Sigmoid colon (tissue), 7 donors: ENCODE measurements at regions of chr3 and their contacts with region 1.

Region 1: GRCh38 chr3:13648060-13649001 is 99.4 kb downstream of the FBLN2 start:
- DNase-seq: peak; percentile 86
- H3K4me3 ChIP-seq: no peak overlapping the region
- H3K27ac ChIP-seq: no peak overlapping the region
- H3K4me1 ChIP-seq: peaks cover 0 to 23% (median 16%) of the 10 kb centered on the region in 4 donors
- H3K27me3 ChIP-seq: peaks cover 0 to 17% (median 9%) of the 10 kb centered on the region in 3 donors
- CTCF ChIP-seq: peak; percentile 86 to 98 (median 92)
- EP300 ChIP-seq: no peak
- POLR2A ChIP-seq: no peak

Region 2: DNA sequence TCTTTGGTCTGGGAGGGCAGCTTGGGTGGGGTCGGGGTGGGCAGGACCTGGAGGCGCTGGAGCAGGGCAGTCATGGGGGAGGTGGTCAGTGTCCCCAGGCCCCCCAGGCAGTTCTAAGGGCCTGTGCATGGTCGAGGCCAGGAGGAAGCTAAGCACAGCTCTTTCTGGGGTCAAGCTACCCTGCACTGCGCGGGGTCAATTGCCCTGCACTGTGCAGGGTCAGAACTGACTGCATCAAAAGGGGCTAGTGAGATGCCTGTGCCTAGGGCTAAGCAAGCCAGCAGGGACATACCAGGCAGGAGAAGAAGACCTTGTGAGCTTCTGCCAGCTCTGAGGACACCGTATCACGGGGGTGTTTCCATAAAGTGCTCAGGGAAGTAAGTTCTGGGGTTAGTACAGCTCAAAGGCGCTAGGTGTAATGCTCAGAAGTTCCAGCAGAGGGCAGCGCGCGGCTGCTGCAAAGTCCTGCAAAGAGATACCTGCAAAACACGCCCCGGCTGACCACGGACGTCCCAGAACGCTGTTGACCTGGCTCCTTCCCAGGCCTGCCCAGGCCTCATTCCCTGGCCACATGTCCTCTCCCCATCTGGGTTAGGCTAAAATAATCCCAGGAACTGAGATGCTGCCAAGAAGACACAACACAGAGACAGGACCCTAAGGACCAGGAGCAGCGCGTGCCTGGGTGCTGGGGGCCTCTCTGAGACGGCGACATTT is 556.3 kb before region 1 on chr3:
- intact Hi-C with region 1: loop called (anchors 1 kb)
- DNase-seq: peak; percentile 90
- H3K4me3 ChIP-seq: no peak overlapping the region
- H3K27ac ChIP-seq: no peak overlapping the region
- H3K4me1 ChIP-seq: peaks cover 0 to 10% (median 7%) of the 10 kb centered on the region in 4 donors
- H3K27me3 ChIP-seq: peaks cover 0 to 7% (median 0%) of the 10 kb centered on the region in 3 donors
- CTCF ChIP-seq: peak; percentile 66 to 94 (median 87)
- EP300 ChIP-seq: no peak
- POLR2A ChIP-seq: no peak

Region 3: DNA sequence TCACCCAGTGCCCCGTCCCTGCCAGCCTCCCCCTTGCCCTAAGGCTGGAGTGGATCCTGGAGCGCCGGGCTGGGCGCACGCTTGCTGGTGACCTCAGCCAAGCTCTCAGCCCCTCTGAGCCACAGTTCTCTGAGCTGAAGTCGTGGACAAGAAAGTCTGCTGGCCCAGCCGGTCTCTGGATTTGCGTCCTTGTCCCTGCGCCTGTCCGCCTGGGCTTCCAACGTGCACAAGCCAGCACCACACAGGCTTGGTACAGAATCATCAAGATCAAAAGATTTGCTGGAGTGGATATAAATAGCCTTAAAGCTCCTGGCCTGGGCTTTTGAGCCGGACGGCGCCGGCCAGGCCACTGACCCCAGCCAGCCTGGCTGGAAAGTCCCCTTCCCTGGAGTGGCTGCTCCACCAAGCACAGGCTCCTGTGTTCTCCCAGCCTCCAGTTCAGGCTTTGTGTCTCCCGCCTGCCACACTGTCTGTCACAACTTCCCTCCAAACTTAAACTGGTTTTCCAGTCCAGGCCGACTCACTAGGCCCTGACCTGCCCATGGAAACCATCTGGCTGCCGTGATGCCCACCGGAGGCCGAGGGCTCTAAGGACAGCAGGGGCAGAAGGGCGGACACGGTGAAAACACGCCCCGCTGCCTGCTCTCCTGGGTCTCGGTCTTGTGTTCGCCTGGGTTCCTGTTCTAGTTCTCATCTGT is 384.4 kb before region 1 on chr3:
- intact Hi-C with region 1: no loop called
- DNase-seq: no peak
- H3K4me3 ChIP-seq: no peak overlapping the region
- H3K27ac ChIP-seq: no peak overlapping the region
- H3K4me1 ChIP-seq: no peaks in the 10 kb centered on the region
- H3K27me3 ChIP-seq: peaks cover 0 to 12% (median 0%) of the 10 kb centered on the region in 3 donors
- CTCF ChIP-seq: no peak
- EP300 ChIP-seq: no peak
- POLR2A ChIP-seq: no peak

Region 4: DNA sequence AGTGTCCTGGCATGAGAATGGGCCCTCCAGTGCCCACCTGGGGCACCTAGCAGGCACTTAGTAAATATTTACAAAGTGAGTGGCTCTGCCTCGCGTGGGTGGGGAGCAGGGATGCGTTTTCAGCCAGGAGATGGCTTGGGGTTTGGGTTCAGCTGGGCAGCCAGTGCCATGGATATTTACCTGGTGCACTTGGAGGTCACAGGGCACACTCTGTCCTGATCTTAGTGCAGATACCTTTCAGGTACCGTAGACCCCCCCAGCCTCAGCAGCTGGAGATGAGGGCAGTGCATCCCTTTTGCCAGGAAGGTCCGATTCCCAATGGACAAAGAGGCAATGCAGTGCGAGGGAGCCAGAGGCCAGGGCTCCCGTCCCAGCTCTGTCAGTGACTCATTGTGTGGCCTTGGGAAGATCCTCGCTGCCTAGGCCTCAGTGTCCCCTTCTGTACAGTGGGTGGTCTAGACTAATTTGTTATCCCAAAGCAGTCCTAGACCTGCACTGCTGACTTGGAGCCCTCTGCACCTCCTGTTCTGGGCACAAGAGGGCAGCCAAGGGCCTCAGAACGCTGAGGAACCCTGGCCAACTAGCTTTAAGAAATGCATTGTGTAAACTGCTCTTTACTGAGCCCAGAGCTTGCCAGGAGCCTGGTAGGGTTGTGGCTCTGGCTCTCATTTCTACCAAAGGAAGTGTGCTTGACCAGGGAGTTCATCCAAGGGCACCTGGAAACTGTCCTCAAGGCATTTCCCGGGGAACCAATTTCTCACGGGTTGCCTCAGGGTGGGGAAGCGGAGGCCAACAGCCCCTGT is 152.2 kb before region 1 on chr3:
- intact Hi-C with region 1: loop called (anchors 1 kb)
- DNase-seq: peak; percentile 92
- H3K4me3 ChIP-seq: no peak overlapping the region
- H3K27ac ChIP-seq: peak overlapping the region in 3 of 4 donors; percentile 45 to 56 (median 52)
- H3K4me1 ChIP-seq: peaks cover 0 to 23% (median 9%) of the 10 kb centered on the region in 4 donors
- H3K27me3 ChIP-seq: no peaks in the 10 kb centered on the region
- CTCF ChIP-seq: peak; percentile 81 to 92 (median 84)
- EP300 ChIP-seq: no peak
- POLR2A ChIP-seq: no peak

Region 5: DNA sequence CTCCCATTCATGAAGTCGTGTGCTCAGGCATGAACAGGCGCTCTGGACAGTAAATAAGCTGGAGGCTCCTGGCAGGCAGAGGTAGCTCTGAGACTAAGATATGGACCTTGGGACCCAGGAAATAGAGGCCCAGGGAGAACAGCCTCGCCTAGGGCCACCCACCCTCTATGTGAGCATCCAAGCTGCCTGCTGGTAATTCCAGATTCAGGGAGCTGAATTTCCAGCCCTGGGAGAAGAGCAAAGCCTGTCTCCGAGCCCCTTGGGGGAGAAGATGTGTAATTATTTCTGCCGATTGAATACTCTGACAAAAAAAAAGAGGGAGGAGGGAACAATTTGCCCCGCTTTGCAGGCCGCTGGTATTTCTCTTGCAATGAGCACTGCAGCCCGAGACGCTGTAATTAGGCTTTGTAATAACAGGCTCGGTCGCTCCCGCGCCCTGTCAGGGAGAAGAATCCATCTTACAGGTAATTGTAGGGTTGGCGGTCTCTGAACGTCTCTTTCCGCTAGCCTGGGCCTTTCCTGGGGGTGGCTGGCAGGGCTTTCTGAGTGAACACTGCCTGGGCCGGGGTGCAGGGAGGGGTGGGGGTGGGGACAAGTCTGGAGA is 100.0 kb after region 1 on chr3:
- intact Hi-C with region 1: no loop called
- DNase-seq: no peak
- H3K4me3 ChIP-seq: no peak overlapping the region
- H3K27ac ChIP-seq: no peak overlapping the region
- H3K4me1 ChIP-seq: no peaks in the 10 kb centered on the region
- H3K27me3 ChIP-seq: peaks cover 0 to 12% (median 0%) of the 10 kb centered on the region in 3 donors
- CTCF ChIP-seq: no peak
- EP300 ChIP-seq: no peak
- POLR2A ChIP-seq: no peak

Region 6: GRCh38 chr3:13822042-13822441 is 173.7 kb after region 1 on chr3:
- intact Hi-C with region 1: no loop called
- DNase-seq: no peak
- H3K4me3 ChIP-seq: no peak overlapping the region
- H3K27ac ChIP-seq: no peak overlapping the region
- H3K4me1 ChIP-seq: no peaks in the 10 kb centered on the region
- H3K27me3 ChIP-seq: no peaks in the 10 kb centered on the region
- CTCF ChIP-seq: no peak
- EP300 ChIP-seq: no peak
- POLR2A ChIP-seq: no peak